ENCODE measurements at regions of chr1 and their contacts with region 1.

Region 1: DNA sequence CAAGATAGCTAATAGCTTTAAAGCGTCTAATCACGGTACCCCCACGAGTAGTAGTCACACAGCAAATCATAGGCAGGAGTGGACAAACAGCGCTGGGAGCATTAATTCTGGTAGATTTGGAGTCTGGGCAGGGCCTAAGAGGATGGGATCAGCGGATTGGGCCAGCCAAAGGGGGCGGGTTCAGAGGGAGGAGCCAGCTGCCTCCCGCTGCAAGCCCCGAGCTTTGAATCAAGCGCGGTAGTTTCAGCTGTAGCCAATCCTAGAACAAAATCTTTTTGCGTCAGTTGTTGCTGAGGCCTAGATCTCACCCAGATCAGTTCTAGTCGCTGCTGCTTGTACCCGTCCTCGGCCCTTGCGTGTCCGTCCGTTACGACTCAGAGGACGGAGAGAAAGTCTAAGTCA is 576 bp upstream of the NASP start:
- DNase-seq: peak; percentile 95
- ATAC-seq: peak; percentile 90
- H3K4me3 ChIP-seq: peak overlapping the region; percentile 90 to 96 (median 95)
- H3K27ac ChIP-seq: peak overlapping the region; percentile 98
- H3K4me1 ChIP-seq: peaks cover 32% of the 10 kb centered on the region
- H3K27me3 ChIP-seq: no peaks in the 10 kb centered on the region; a peak in 2 of 5 replicates
- CTCF ChIP-seq: no peak
- EP300 ChIP-seq: no peak
- POLR2A ChIP-seq: no peak
- RAD21 ChIP-seq: no peak

Region 2: DNA sequence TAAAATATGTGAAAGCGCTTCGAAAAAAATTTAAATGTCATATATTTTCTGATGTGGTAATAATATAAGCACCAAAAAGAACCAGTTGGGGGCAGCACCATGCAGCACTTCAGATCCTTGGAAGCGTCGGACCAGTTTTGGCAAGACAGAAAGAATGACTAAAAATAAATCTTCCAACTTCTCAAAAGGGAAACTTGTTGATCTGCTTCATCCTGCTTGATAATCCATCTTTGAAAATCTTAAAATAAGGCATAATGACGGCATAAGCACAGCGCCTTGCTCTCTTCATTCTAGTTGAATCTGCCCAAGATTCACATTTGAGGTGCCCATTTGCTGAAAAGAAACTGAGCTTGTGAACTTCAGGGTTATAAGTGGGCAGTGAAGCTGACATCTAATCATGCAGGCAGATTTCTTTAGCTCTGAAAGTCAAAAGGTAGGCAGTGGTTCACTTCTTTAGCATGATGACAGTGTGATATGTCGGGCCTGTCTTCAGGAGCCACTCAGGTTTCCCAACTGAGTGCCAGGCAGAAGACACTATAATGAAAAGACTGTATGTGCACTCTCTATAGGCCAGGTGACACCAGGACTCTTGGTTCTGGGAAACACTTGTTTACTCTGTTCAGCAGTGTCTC is 223.3 kb before region 1 on chr1:
- CTCF ChIA-PET with region 1: no interaction called
- POLR2A ChIA-PET with region 1: no interaction called
- in situ Hi-C with region 1: loop called (anchors 25 kb)
- intact Hi-C with region 1: no loop called
- DNase-seq: peak; percentile 40
- ATAC-seq: peak; percentile 47
- H3K4me3 ChIP-seq: no peak overlapping the region
- H3K27ac ChIP-seq: no peak overlapping the region
- H3K4me1 ChIP-seq: peaks cover 32% of the 10 kb centered on the region
- H3K27me3 ChIP-seq: no peaks in the 10 kb centered on the region
- CTCF ChIP-seq: peak; percentile 53
- EP300 ChIP-seq: no peak
- POLR2A ChIP-seq: no peak
- RAD21 ChIP-seq: peak; percentile 46; the same call in 1 of the 2 replicates

Region 3: GRCh38 chr1:45499415-45499769 is 83.9 kb before region 1 on chr1:
- CTCF ChIA-PET with region 1: no interaction called
- POLR2A ChIA-PET with region 1: interaction called, 18 read pairs
- in situ Hi-C with region 1: no loop called
- intact Hi-C with region 1: no loop called
- DNase-seq: no peak
- ATAC-seq: no peak; the same call in 1 of the 3 replicates
- H3K4me3 ChIP-seq: peak overlapping the region; percentile 74 to 83 (median 77)
- H3K27ac ChIP-seq: peak overlapping the region; percentile 71
- H3K4me1 ChIP-seq: peaks cover 43% of the 10 kb centered on the region
- H3K27me3 ChIP-seq: no peaks in the 10 kb centered on the region; a peak in 1 of 5 replicates
- CTCF ChIP-seq: no peak
- EP300 ChIP-seq: no peak
- POLR2A ChIP-seq: no peak
- RAD21 ChIP-seq: no peak

Region 4: DNA sequence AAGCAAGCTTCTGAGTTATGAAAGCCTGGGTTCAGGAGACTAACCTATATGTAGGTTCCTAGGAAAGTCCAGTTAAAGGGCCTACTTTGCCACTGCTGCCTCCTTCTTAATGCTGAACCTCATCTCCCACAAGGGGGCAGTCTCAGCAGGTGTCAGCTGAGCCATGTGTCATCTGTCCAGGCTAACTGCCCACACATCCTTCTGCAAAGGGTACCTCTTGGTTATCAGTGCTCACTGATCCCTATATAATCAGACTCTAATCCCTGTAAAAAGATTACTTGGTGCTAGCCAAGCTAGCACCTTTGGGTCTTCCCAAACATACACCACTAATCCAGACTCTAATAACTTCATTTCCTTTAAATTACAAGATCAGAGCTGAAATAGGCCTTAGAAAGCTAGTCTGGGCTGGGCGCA is 70.6 kb before region 1 on chr1:
- CTCF ChIA-PET with region 1: no interaction called
- POLR2A ChIA-PET with region 1: interaction called, 79 read pairs
- in situ Hi-C with region 1: no loop called
- intact Hi-C with region 1: no loop called
- DNase-seq: peak; percentile 76
- ATAC-seq: peak; percentile 40
- H3K4me3 ChIP-seq: no peak overlapping the region
- H3K27ac ChIP-seq: no peak overlapping the region
- H3K4me1 ChIP-seq: peaks cover 59% of the 10 kb centered on the region
- H3K27me3 ChIP-seq: no peaks in the 10 kb centered on the region
- CTCF ChIP-seq: peak; percentile 82
- EP300 ChIP-seq: no peak
- POLR2A ChIP-seq: peak in 1 of 2 experiments; percentile 64; a peak in 2 of 4 replicates
- RAD21 ChIP-seq: peak; percentile 77

Region 5: DNA sequence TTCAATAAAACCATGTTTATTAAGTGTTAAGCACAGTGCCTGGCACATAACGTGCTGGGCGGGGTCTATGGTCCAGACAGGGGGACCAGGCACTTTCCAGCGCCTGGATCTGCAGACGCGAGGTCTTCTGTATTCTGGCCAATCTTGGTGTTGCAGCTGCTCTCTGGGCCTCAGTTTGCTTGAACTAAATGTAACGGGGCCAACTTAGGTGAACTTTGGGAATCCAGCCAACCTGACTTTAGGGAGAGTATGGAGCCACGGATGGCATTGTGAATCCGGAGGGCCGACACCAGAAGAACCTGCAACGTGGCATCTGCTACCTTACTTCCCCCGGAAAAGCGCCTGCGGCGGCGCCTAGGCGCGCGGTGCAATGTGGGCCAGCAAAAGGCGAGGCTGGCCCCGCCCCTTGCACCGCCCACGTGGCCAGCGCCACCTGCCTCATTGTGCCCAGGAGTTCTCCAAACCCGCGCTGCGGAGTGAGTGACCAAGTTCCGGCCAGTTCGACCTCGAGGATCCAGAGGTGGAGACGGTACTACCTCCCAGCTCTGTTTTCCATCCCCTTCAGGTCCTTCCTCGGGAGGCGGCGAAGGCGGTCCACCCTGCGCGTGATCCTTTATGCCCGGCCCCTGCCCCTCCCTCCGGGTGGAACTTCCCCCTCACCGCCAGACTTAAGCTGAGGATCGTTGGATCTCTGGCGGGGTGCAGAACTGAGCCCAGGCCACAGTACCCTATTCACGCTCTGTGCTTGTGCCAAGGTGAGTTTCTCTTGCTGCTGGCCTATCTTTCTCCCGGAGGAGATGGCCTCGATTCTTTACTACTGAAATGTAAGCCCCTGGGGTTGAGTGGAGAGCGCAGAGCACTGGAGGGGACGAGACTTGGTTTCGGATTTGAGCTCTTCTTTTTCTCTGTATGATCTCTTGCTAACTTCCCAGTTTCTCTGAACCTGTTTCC is 32.6 kb before region 1 on chr1 and contains the start of gene AKR1A1:
- CTCF ChIA-PET with region 1: no interaction called
- POLR2A ChIA-PET with region 1: interaction called, 17 read pairs
- in situ Hi-C with region 1: no loop called
- intact Hi-C with region 1: loop called (anchors 2 kb)
- DNase-seq: peak; percentile 87
- ATAC-seq: peak; percentile 91
- H3K4me3 ChIP-seq: peak within 1 kb of the TSS; percentile 75 to 87 (median 82)
- H3K27ac ChIP-seq: peak within 1 kb of the TSS; percentile 92
- H3K4me1 ChIP-seq: peaks cover 48% of the 10 kb centered on the region
- H3K27me3 ChIP-seq: no peaks in the 10 kb centered on the region; a peak in 1 of 5 replicates
- CTCF ChIP-seq: peak; percentile 38; the same call in 1 of the 2 replicates
- EP300 ChIP-seq: no peak; a peak in 1 of 4 replicates
- POLR2A ChIP-seq: peak; percentile 93 to 97
- RAD21 ChIP-seq: peak; percentile 54
- total RNA-seq, gene AKR1A1: 217 and 233 TPM in 2 replicates

Region 6: GRCh38 chr1:45730475-45731339 is 147.4 kb after region 1 on chr1:
- CTCF ChIA-PET with region 1: no interaction called
- POLR2A ChIA-PET with region 1: no interaction called
- in situ Hi-C with region 1: no loop called
- intact Hi-C with region 1: no loop called
- DNase-seq: no peak
- ATAC-seq: no peak
- H3K4me3 ChIP-seq: no peak overlapping the region
- H3K27ac ChIP-seq: no peak overlapping the region
- H3K4me1 ChIP-seq: no peaks in the 10 kb centered on the region
- H3K27me3 ChIP-seq: no peaks in the 10 kb centered on the region
- CTCF ChIP-seq: no peak
- EP300 ChIP-seq: no peak
- POLR2A ChIP-seq: no peak
- RAD21 ChIP-seq: no peak

Region 7: GRCh38 chr1:45750298-45751038 is 167.2 kb after region 1 on chr1 and contains the start of gene IPP:
- CTCF ChIA-PET with region 1: no interaction called
- POLR2A ChIA-PET with region 1: no interaction called
- in situ Hi-C with region 1: no loop called
- intact Hi-C with region 1: loop called (anchors 5 kb)
- DNase-seq: peak; percentile 95
- ATAC-seq: peak; percentile 93
- H3K4me3 ChIP-seq: peak within 1 kb of the TSS; percentile 72 to 86 (median 79)
- H3K27ac ChIP-seq: peak within 1 kb of the TSS; percentile 97
- H3K4me1 ChIP-seq: peaks cover 51% of the 10 kb centered on the region
- H3K27me3 ChIP-seq: no peaks in the 10 kb centered on the region
- CTCF ChIP-seq: peak; percentile 81
- EP300 ChIP-seq: peak in 1 of 2 experiments; percentile 27; a peak in 2 of 4 replicates
- POLR2A ChIP-seq: peak; percentile 94 to 95
- RAD21 ChIP-seq: peak; percentile 79
- total RNA-seq, gene IPP: 9.7 and 14.1 TPM in 2 replicates

Measured in HepG2 (cell line).